HepG2 (cell line): ENCODE measurements at regions of chr12 and their contacts with region 1.

Region 1: GRCh38 chr12:50504798-50505385 is at the start of gene DIP2B:
- DNase-seq: peak; percentile 84
- ATAC-seq: peak; percentile 80
- H3K4me3 ChIP-seq: peak within 1 kb of the TSS; percentile 89 to 98 (median 90)
- H3K27ac ChIP-seq: peak within 1 kb of the TSS; percentile 93
- H3K4me1 ChIP-seq: peaks cover 41% of the 10 kb centered on the region
- H3K27me3 ChIP-seq: no peaks in the 10 kb centered on the region; a peak in 1 of 5 replicates
- CTCF ChIP-seq: peak; percentile 98
- EP300 ChIP-seq: no peak; a peak in 1 of 4 replicates
- POLR2A ChIP-seq: peak in 1 of 2 experiments; percentile 32; a peak in 1 of 4 replicates
- RAD21 ChIP-seq: peak; percentile 98
- total RNA-seq, gene DIP2B: 35.8 and 52.4 TPM in 2 replicates

Region 2: GRCh38 chr12:50537538-50537919 is 32.6 kb after region 1 on chr12:
- CTCF ChIA-PET with region 1: no interaction called
- POLR2A ChIA-PET with region 1: interaction called, 17 read pairs
- in situ Hi-C with region 1: no loop called
- intact Hi-C with region 1: no loop called
- DNase-seq: no peak
- ATAC-seq: peak; percentile 41; the same call in 1 of the 3 replicates
- H3K4me3 ChIP-seq: no peak overlapping the region
- H3K27ac ChIP-seq: peak overlapping the region; percentile 39
- H3K4me1 ChIP-seq: peaks cover 75% of the 10 kb centered on the region
- H3K27me3 ChIP-seq: no peaks in the 10 kb centered on the region
- CTCF ChIP-seq: no peak
- EP300 ChIP-seq: no peak
- POLR2A ChIP-seq: no peak
- RAD21 ChIP-seq: no peak

Region 3: DNA sequence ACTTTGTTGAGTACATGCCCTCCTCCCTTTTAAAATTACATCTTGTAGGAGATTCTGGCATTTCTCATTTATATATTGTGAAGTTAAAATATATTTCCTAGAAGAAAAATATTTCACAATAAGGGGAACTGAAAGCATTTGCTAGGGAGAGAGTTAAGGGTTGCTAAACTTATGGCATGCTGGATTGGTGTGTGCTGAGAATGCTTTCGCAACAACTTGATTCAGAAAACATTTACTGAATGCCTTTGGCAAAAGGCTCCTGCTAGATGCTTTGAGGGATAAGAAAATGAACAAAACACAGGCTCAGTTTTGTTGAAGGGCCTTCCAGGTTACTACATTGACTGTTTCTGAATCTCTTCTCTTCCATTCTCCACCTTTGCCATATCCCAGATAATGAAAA is 67.4 kb after region 1 on chr12:
- CTCF ChIA-PET with region 1: no interaction called
- POLR2A ChIA-PET with region 1: interaction called, 7 read pairs
- in situ Hi-C with region 1: no loop called
- intact Hi-C with region 1: loop called (anchors 2 kb)
- DNase-seq: peak; percentile 84
- ATAC-seq: peak; percentile 63
- H3K4me3 ChIP-seq: peak overlapping the region in 1 of 3 experiments; percentile 10; a peak in 1 of 6 replicates
- H3K27ac ChIP-seq: peak overlapping the region; percentile 45
- H3K4me1 ChIP-seq: peaks cover 93% of the 10 kb centered on the region
- H3K27me3 ChIP-seq: no peaks in the 10 kb centered on the region; a peak in 1 of 5 replicates
- CTCF ChIP-seq: no peak
- EP300 ChIP-seq: peak in 1 of 2 experiments; percentile 65; a peak in 2 of 4 replicates
- POLR2A ChIP-seq: no peak
- RAD21 ChIP-seq: no peak

Region 4: DNA sequence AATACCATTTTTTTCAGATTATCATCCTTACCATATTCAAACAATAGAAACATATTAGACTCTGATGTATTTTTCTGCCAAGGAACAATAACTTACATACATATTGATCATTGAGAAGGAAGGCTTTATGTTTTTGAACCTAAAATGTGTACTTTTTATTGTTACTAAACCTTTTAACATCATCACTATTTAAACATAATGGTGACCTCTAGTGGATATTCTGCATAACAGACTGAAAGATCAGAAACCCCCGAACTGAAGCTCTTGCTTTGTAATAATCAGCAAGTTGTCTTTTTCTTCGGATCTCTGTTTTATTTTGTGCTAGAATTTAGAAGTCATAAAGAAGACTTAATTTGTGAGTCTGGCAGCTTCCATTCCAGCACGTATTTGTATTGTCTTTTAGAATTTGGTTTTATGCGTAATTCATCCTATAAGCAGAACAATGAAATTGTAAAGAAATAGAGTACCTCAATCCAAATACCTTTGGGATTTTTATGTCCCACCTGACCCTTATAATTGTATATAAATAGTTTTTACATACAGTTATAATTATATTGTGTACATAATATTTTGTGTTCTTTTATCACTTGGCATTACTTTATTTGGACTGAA is 133.1 kb after region 1 on chr12:
- CTCF ChIA-PET with region 1: interaction called, 22 read pairs
- POLR2A ChIA-PET with region 1: interaction called, 4 read pairs
- in situ Hi-C with region 1: loop called (anchors 5 kb)
- intact Hi-C with region 1: loop called (anchors 1 kb)
- DNase-seq: peak; percentile 40
- ATAC-seq: no peak
- H3K4me3 ChIP-seq: no peak overlapping the region
- H3K27ac ChIP-seq: no peak overlapping the region
- H3K4me1 ChIP-seq: peaks cover 49% of the 10 kb centered on the region
- H3K27me3 ChIP-seq: no peaks in the 10 kb centered on the region
- CTCF ChIP-seq: peak; percentile 65
- EP300 ChIP-seq: no peak
- POLR2A ChIP-seq: no peak
- RAD21 ChIP-seq: peak; percentile 27; the same call in 1 of the 2 replicates